Activated CD4-positive, alpha-beta T cell treated with anti-CD3 and anti-CD28 coated beads for 36 hours (primary cell): ENCODE measurements at regions of chr4 and their contacts with region 1.

Region 1: DNA sequence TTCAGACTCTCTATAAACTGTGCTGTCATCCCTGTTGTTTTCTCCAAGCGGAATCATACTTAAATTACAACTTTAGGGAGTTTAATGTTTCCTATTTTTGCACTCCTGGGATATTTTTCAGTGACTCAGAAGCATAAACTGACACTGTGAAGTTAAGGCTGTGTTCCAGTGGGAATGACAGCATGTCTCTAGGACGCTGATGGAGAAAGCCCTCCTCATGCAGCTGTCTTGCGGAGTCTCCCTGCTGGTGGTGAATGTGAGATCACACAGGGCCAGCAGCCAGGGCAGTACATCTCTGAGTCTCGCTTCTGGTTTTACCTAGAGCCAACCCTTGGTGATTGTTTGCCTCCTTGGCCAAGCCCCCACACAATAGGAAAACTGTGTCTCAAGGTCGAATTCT is 53.3 kb downstream of the NFKB1 start:
- DNase-seq: no peak
- ATAC-seq: no peak
- H3K4me3 Mint-ChIP-seq: no peak overlapping the region
- H3K27ac Mint-ChIP-seq: no peak overlapping the region
- H3K4me1 Mint-ChIP-seq: peaks cover 58% of the 10 kb centered on the region
- H3K27me3 Mint-ChIP-seq: no peaks in the 10 kb centered on the region

Region 2: DNA sequence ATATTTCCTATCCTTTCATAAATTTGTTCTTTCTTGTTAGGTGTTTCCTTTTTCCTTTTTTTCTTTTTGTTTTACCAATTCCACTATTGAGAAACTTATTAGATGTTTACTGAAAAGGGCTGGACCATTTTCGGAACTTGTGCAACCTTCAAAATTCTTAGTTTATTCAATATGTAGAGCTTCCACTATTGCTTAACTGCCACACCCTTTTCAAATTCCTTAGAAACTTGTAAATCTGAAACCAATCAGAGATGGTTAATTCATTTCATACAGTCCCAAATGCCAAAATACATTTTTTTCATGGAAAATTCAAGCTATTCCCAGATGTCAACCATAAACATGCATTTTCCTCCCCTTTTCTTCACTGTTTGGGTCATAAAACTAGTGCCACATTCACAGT is 143.1 kb before region 1 on chr4:
- CTCF ChIA-PET with region 1: no interaction called
- POLR2A ChIA-PET with region 1: no interaction called
- intact Hi-C with region 1: no loop called
- DNase-seq: no peak
- ATAC-seq: no peak
- H3K4me3 Mint-ChIP-seq: no peak overlapping the region
- H3K27ac Mint-ChIP-seq: no peak overlapping the region
- H3K4me1 Mint-ChIP-seq: no peaks in the 10 kb centered on the region
- H3K27me3 Mint-ChIP-seq: peaks cover 6% of the 10 kb centered on the region

Region 3: DNA sequence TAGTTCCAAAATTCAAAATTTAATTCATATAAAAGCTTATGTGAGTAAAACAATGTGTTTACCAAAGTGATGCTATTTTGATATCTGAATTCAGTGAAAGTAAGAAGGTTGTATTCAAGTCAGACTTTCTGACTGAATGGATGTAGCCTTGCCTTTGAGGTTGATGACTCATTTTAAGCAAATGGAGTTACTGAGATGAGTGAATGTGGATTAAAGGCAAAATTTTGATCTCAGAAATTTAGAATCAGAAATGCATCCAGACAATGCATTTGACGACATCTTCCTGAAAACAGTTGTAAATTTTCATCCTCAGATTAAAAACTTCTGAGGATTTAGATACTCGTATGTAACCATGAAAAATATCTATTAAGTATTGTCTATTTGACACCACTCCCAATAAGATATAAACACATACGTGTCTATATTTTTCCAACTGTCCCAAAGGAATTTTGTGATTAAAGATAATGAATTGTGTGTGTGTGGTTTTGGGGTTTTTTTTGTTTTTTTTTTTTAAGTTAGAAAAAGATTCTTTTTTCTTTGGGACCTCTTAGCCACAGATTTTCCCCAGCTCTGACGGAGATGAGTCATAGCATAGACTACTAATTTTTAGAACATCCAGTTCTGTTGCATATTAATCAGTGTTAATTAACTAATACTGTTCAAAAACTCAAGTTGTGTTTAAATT is 18.9 kb before region 1 on chr4:
- CTCF ChIA-PET with region 1: interaction called, 8 read pairs
- POLR2A ChIA-PET with region 1: no interaction called
- intact Hi-C with region 1: loop called in 1 of 2 experiments (anchors 1 kb)
- DNase-seq: no peak
- ATAC-seq: peak; percentile 90
- H3K4me3 Mint-ChIP-seq: peak overlapping the region; percentile 39
- H3K27ac Mint-ChIP-seq: peak overlapping the region; percentile 25
- H3K4me1 Mint-ChIP-seq: peaks cover 58% of the 10 kb centered on the region
- H3K27me3 Mint-ChIP-seq: no peaks in the 10 kb centered on the region

Region 4: DNA sequence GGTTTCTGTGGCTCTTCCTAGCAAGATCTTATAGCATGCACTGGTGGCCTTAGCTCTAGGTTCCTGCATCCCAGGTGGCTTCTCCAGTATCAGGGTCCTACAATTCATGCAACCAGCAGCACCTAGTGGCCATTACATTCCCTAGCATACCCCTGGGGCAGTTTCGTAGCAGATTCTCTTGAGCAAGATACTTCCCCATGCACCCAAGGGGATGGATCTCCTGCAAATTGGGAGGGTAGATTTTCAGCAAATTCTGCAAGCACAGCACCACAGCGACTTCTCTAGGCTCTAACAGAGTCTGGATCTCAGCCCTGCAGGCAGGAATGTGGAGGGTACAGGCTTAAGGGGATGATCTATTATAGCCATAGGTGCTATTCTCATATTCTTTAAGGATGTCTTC is 478.1 kb after region 1 on chr4:
- CTCF ChIA-PET with region 1: no interaction called
- POLR2A ChIA-PET with region 1: no interaction called
- intact Hi-C with region 1: no loop called
- DNase-seq: peak; percentile 23
- ATAC-seq: peak; percentile 63
- H3K4me3 Mint-ChIP-seq: no peak overlapping the region
- H3K27ac Mint-ChIP-seq: no peak overlapping the region
- H3K4me1 Mint-ChIP-seq: no peaks in the 10 kb centered on the region
- H3K27me3 Mint-ChIP-seq: no peaks in the 10 kb centered on the region